Heart left ventricle (tissue), 16 donors: ENCODE measurements at regions of chr1 and their contacts with region 1.

Region 1: DNA sequence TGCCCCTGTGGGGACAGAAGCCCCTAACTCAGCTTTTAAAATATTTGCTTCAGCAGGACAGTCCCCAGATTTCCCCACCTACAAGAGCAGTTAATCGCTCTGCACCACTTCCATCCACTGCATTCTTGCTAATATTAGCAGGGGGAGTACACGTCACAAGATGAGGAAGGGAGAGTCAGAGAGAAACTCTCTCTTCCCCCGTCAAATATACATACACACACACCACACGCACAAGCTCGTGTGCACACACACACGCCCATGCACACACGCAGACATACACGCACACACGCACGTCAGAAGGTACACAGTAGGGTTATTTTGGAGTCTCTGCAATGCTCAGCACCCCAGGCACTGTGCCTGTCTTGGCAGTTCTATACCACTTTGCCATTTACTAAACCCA is 2.1 kb downstream of the CLCA1 start:
- DNase-seq: no peak
- ATAC-seq: peak in 1 of 4 donors; percentile 32
- H3K4me3 ChIP-seq: no peak overlapping the region
- H3K27ac ChIP-seq: no peak overlapping the region
- H3K4me1 ChIP-seq: no peaks in the 10 kb centered on the region
- H3K27me3 ChIP-seq: no peaks in the 10 kb centered on the region
- CTCF ChIP-seq: no peak
- POLR2A ChIP-seq: no peak

Region 2: DNA sequence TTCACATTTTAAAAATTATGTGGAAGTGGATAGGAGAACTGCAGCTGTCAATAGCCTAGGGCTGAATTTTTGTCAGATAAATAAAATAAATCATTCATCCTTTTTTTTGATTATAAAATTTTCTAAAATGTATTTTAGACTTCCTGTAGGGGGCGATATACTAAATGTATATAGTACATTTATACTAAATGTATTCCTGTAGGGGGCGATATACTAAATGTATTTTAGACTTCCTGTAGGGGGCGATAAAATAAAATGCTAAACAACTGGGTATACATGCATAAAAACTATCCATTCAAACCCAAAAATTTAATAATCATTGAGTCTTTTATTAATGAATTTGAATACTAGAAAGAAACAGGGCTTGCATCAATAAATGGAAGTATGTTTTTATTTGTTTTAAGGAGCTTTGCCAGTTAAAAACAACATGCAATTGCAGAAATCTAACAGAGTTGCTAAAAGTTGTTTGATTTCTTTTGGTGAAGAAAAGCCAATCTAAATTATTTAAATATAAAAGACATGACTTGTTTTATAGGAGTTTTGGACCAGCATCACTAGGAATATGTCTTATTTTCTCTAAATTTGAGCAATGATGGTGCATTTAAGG is 29.2 kb after region 1 on chr1:
- intact Hi-C with region 1: loop called in 8 of 10 experiments (anchors 2 to 5 kb)
- DNase-seq: no peak
- ATAC-seq: no peak
- H3K4me3 ChIP-seq: no peak overlapping the region
- H3K27ac ChIP-seq: peak overlapping the region in 6 of 12 donors; percentile 10 to 94 (median 41)
- H3K4me1 ChIP-seq: peaks cover 0 to 37% (median 16%) of the 10 kb centered on the region in 12 donors
- H3K27me3 ChIP-seq: no peaks in the 10 kb centered on the region
- CTCF ChIP-seq: peak; percentile 73 to 99 (median 89)
- POLR2A ChIP-seq: no peak

Region 3: GRCh38 chr1:86507935-86508582 is 37.2 kb after region 1 on chr1:
- intact Hi-C with region 1: loop called in 8 of 10 experiments (anchors 2 to 5 kb)
- DNase-seq: peak in 1 of 5 donors; percentile 21
- ATAC-seq: no peak
- H3K4me3 ChIP-seq: no peak overlapping the region
- H3K27ac ChIP-seq: no peak overlapping the region
- H3K4me1 ChIP-seq: peaks cover 0 to 24% (median 8%) of the 10 kb centered on the region in 12 donors
- H3K27me3 ChIP-seq: no peaks in the 10 kb centered on the region
- CTCF ChIP-seq: peak; percentile 29 to 66 (median 52)
- POLR2A ChIP-seq: no peak

Region 4: GRCh38 chr1:86640161-86640670 is 169.4 kb after region 1 on chr1:
- intact Hi-C with region 1: no loop called
- DNase-seq: no peak
- ATAC-seq: peak in 1 of 4 donors; percentile 34
- H3K4me3 ChIP-seq: no peak overlapping the region
- H3K27ac ChIP-seq: no peak overlapping the region
- H3K4me1 ChIP-seq: no peaks in the 10 kb centered on the region
- H3K27me3 ChIP-seq: no peaks in the 10 kb centered on the region
- CTCF ChIP-seq: no peak
- POLR2A ChIP-seq: no peak

Region 5: DNA sequence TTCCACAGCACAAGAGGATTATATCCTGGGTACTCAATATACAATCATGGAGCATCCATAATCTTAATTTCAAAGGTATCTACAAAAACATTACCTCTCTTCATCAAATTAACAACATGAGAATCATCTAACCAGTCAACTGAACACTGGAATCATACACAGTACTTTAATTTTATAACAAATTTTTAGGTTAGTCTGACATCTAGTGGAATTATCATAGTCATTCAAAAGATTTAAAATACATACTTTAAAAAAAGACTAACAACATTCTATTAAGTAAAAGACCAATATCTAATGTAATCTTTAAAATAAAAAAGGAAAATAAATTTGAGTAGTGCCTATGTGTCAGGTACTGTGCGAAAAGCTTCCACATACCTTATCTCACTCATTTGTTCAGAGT is 216.7 kb after region 1 on chr1:
- intact Hi-C with region 1: loop called in 4 of 10 experiments (anchors 5 to 10 kb)
- DNase-seq: no peak
- ATAC-seq: no peak
- H3K4me3 ChIP-seq: no peak overlapping the region
- H3K27ac ChIP-seq: no peak overlapping the region
- H3K4me1 ChIP-seq: no peaks in the 10 kb centered on the region
- H3K27me3 ChIP-seq: no peaks in the 10 kb centered on the region
- CTCF ChIP-seq: peak in 7 of 12 donors; percentile 6 to 42 (median 25)
- POLR2A ChIP-seq: no peak

Region 6: DNA sequence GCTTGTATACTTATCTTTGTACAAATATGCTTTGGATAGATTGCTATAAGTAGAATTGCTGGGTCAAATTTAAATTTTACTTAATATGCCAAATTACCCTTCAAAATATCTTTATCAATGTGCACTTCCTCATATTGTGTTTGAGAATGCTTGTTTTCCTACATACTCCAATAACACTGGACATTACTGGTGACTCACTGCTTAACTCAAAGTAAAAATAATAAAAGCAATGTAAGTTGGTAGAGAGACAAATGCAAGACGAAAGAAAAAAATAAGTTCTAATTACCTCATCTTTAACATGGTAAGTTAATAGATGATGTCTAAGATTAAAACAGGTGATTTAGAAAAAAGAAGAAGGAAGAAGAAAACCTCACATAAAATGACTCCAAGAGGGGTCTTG is 225.7 kb after region 1 on chr1:
- intact Hi-C with region 1: loop called in 2 of 10 experiments (anchors 10 kb)
- DNase-seq: no peak
- ATAC-seq: no peak
- H3K4me3 ChIP-seq: no peak overlapping the region
- H3K27ac ChIP-seq: no peak overlapping the region
- H3K4me1 ChIP-seq: no peaks in the 10 kb centered on the region
- H3K27me3 ChIP-seq: no peaks in the 10 kb centered on the region
- CTCF ChIP-seq: no peak
- POLR2A ChIP-seq: no peak

Region 7: GRCh38 chr1:86741947-86742572 is 271.2 kb after region 1 on chr1:
- intact Hi-C with region 1: loop called in 1 of 10 experiments (anchors 10 kb)
- DNase-seq: peak in 1 of 5 donors; percentile 32
- ATAC-seq: no peak
- H3K4me3 ChIP-seq: no peak overlapping the region
- H3K27ac ChIP-seq: no peak overlapping the region
- H3K4me1 ChIP-seq: peaks cover 0 to 25% (median 8%) of the 10 kb centered on the region in 12 donors
- H3K27me3 ChIP-seq: no peaks in the 10 kb centered on the region
- CTCF ChIP-seq: peak; percentile 55 to 77 (median 67)
- POLR2A ChIP-seq: no peak